ENCODE measurements at regions of chr10 and their contacts with region 1.

Region 1: DNA sequence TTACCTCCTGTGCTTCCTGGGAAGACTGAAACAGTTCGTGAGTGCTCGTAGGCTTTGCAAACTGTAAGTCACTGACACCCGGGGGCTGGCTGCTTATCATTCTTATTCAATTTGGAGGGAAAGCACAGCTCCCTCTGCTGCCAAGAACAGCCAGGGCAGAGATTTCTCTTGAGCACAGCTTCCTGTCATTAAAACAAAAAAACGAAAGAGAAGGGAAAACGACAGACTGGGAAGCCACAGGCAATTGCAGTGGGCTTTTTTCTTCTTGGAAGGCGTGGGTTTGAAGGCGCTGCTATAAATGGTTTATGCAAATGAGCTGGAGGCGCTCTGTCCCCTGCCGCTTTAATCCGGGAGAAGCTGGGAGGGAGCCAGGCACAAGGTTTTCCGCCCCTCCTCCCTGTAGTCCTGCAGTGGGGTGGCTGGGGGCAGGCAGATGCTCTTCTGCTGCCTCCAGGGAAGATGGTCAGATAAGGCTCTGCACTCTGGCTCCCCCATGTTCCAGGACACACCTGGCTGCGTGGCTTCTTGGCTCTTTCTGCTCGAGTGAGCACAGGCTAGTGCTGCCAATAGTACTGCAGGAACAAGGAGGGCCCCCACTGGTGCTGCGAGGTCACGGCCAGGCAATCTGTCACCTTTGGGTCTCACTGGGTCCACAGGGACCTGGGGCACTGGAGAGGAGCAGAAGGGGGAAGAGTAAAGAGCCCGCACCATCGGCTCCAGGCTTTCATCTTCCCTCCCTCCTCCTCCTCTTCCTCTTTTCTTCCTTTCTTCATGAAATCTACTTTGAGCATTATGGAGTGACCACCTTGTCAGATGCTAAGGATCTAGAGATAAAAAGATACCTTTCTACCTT is 49.5 kb downstream of the NEURL1 start:
- DNase-seq: peak; percentile 77
- H3K4me3 Mint-ChIP-seq: peak overlapping the region; percentile 42
- H3K27ac Mint-ChIP-seq: peak overlapping the region; percentile 9
- H3K4me1 Mint-ChIP-seq: peaks cover 13% of the 10 kb centered on the region
- H3K27me3 Mint-ChIP-seq: peaks cover 2% of the 10 kb centered on the region

Region 2: GRCh38 chr10:103504181-103504783 is 38.7 kb before region 1 on chr10:
- CTCF ChIA-PET with region 1: interaction called, 3 read pairs
- intact Hi-C with region 1: loop called (anchors 2 kb)
- DNase-seq: peak; percentile 73
- H3K4me3 Mint-ChIP-seq: no peak overlapping the region
- H3K27ac Mint-ChIP-seq: no peak overlapping the region
- H3K4me1 Mint-ChIP-seq: peaks cover 20% of the 10 kb centered on the region
- H3K27me3 Mint-ChIP-seq: peaks cover 23% of the 10 kb centered on the region

Region 3: GRCh38 chr10:103517234-103518085 is 25.5 kb before region 1 on chr10:
- CTCF ChIA-PET with region 1: no interaction called
- intact Hi-C with region 1: no loop called
- DNase-seq: no peak
- H3K4me3 Mint-ChIP-seq: no peak overlapping the region
- H3K27ac Mint-ChIP-seq: no peak overlapping the region
- H3K4me1 Mint-ChIP-seq: peaks cover 7% of the 10 kb centered on the region
- H3K27me3 Mint-ChIP-seq: no peaks in the 10 kb centered on the region

Measured in activated naive CD4-positive, alpha-beta T cell treated with anti-CD3 and anti-CD28 coated beads for 36 hours (primary cell).